A673 (cell line): ENCODE measurements at regions of chr10 and their contacts with region 1.

Region 1: GRCh38 chr10:11611248-11612020 is at the start of gene USP6NL:
- DNase-seq: peak; percentile 92
- H3K4me3 ChIP-seq: peak within 1 kb of the TSS; percentile 95
- H3K27ac ChIP-seq: peak within 1 kb of the TSS; percentile 95
- H3K4me1 ChIP-seq: peaks cover 26% of the 10 kb centered on the region
- H3K27me3 ChIP-seq: no peaks in the 10 kb centered on the region
- CTCF ChIP-seq: no peak
- total RNA-seq, gene USP6NL: 38.7 and 40.0 TPM in 2 replicates

Region 2: DNA sequence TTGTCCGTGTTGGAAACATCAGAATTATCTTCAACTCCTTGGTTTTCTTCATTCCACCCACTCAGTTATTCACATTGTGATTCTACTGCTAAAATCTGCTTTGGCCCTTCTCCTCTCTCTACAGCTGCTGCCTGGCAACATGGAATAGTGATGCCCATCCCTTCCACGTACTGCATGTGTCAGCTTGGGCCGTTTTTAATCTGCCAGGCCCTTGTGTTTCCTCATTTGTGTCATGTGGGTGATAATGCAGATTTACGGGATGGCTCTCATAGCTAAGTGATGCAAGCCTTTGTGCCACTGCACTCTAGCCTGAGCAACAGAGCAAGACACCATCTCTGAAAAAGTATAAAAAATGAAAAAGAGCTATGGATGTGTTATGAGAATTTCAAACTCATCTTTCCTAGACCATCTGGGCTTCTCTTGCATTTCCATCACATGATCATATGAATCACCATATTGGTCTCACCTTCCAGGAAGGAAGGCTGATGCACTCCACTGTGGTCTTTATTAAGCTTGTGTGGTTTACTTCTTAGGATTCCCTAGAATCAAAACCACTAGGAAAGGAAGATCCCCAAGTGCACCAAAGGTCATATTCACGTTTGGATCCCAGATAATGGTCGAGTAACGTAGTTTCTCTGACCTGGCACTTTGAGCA is 614.3 kb before region 1 on chr10:
- CTCF ChIA-PET with region 1: no interaction called
- POLR2A ChIA-PET with region 1: no interaction called
- intact Hi-C with region 1: no loop called
- DNase-seq: no peak
- H3K4me3 ChIP-seq: no peak overlapping the region
- H3K27ac ChIP-seq: no peak overlapping the region
- H3K4me1 ChIP-seq: no peaks in the 10 kb centered on the region
- H3K27me3 ChIP-seq: peaks cover 24% of the 10 kb centered on the region
- CTCF ChIP-seq: no peak

Region 3: GRCh38 chr10:11724938-11725776 is 113.7 kb after region 1 on chr10:
- CTCF ChIA-PET with region 1: no interaction called
- POLR2A ChIA-PET with region 1: no interaction called
- intact Hi-C with region 1: loop called (anchors 10 kb)
- DNase-seq: peak; percentile 85
- H3K4me3 ChIP-seq: no peak overlapping the region
- H3K27ac ChIP-seq: no peak overlapping the region
- H3K4me1 ChIP-seq: no peaks in the 10 kb centered on the region
- H3K27me3 ChIP-seq: no peaks in the 10 kb centered on the region
- CTCF ChIP-seq: peak; percentile 90